ENCODE measurements at regions of chr5 and their contacts with region 1.

Region 1: DNA sequence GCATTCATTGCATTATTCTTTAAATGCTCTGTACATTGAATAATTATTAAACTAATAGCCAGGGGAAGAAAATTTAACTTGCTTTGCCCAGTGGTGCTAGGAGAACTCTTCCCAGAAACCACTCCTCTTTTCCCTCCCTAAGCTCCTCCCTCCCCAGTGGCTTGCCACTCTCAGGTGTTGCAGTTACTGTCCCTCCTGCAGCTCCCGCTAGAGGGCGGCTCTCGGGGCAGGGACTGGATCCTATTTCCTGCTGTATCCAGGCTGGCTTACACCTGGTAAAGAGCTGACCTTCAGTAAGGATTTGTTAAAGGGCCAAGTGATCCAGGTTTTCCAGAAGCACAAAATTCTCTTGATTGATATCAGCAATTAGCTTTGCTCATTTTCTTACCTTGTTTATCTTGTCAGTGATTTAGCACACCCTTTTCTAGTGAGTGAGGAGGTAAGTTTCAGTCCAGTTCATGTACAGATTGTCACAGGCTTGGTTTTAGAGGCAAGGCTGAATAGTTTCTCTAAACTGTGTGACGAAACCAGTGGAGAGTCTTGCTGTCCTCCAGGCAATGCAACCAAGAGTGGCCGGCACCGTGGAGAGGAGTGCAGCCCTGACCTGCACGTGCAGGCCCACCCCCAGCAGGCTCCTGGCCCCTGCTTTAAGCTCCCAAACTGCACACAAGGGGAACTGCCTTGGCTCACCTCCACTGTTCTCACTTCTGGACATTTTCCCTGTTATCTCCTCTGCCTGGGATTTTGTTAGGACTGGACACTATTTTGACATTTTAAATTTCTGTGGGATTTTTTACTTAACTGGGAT is 423.8 kb downstream of the SPOCK1 start:
- DNase-seq: peak; percentile 69
- ATAC-seq: peak; percentile 100
- H3K4me3 ChIP-seq: no peak overlapping the region
- H3K27ac ChIP-seq: no peak overlapping the region
- H3K4me1 ChIP-seq: no peaks in the 10 kb centered on the region
- H3K27me3 ChIP-seq: no peaks in the 10 kb centered on the region; a peak in 1 of 5 replicates
- CTCF ChIP-seq: peak; percentile 81
- EP300 ChIP-seq: no peak
- POLR2A ChIP-seq: no peak
- RAD21 ChIP-seq: peak; percentile 32; the same call in 1 of the 2 replicates

Region 2: DNA sequence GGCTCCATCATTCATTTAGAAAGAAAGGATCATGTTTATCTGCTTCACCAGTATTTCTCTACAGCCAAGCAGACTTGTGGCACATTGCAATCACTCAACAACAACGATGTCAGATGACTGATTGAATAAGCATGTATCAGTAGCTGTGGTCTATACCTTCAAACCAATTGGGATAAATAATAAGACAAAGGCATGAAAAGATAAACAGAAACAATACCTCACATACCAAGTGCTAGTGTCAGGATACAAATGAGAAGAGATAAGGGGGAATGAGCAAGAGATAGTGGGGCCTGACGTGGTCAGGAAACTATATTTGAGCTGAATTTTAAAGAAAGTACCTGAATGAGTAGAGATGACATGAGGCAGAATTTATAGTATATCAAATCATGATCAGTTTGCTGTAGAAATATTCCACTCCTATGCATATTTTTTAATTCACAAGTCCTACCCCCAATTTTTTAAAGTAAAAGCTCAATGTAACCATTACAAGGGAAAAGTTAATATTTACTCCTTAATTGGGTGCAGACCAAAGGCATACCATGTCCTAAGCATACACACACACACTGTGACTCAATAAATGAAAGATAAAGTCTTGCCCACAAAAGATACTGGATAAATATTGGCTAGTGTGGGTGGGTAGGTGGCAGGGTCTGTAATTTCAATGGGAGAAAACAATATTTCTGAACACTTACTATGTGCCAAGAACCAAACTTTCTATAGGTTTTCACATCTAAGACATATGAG is 139.3 kb after region 1 on chr5:
- CTCF ChIA-PET with region 1: no interaction called
- POLR2A ChIA-PET with region 1: no interaction called
- in situ Hi-C with region 1: no loop called
- intact Hi-C with region 1: loop called (anchors 1 kb)
- DNase-seq: peak; percentile 32
- ATAC-seq: no peak
- H3K4me3 ChIP-seq: peak overlapping the region in 1 of 3 experiments; percentile 0; a peak in 1 of 6 replicates
- H3K27ac ChIP-seq: no peak overlapping the region
- H3K4me1 ChIP-seq: peaks cover 66% of the 10 kb centered on the region
- H3K27me3 ChIP-seq: no peaks in the 10 kb centered on the region
- CTCF ChIP-seq: no peak
- EP300 ChIP-seq: peak in 1 of 2 experiments; percentile 22; a peak in 1 of 4 replicates
- POLR2A ChIP-seq: no peak
- RAD21 ChIP-seq: no peak

Region 3: GRCh38 chr5:137220523-137220927 is 145.2 kb after region 1 on chr5:
- CTCF ChIA-PET with region 1: no interaction called
- POLR2A ChIA-PET with region 1: no interaction called
- in situ Hi-C with region 1: loop called (anchors 5 kb)
- intact Hi-C with region 1: loop called (anchors 1 kb)
- DNase-seq: peak; percentile 76
- ATAC-seq: peak; percentile 93
- H3K4me3 ChIP-seq: no peak overlapping the region
- H3K27ac ChIP-seq: no peak overlapping the region
- H3K4me1 ChIP-seq: peaks cover 34% of the 10 kb centered on the region
- H3K27me3 ChIP-seq: no peaks in the 10 kb centered on the region
- CTCF ChIP-seq: peak; percentile 69
- EP300 ChIP-seq: no peak
- POLR2A ChIP-seq: no peak
- RAD21 ChIP-seq: no peak

Region 4: DNA sequence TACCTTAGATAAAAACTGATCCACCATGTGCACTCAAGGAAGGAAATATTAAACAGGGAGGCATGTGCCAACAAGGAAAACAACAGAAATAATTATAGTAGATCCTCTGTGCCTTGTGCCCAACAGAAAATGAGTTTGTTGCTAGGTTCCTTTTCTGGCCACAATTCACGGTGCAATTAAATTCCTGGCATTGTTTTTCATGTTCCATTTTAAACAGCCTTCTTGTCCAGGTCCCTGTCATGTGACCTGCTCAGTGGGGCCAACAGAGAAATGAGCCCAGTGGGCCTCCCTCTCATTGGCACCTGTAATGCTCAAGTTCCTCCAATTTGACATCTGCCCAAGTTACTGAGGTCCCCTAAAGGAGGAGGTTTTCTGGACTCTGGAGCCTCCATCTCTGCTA is 367.3 kb after region 1 on chr5:
- CTCF ChIA-PET with region 1: no interaction called
- POLR2A ChIA-PET with region 1: no interaction called
- in situ Hi-C with region 1: no loop called
- intact Hi-C with region 1: no loop called
- DNase-seq: no peak
- ATAC-seq: no peak
- H3K4me3 ChIP-seq: no peak overlapping the region
- H3K27ac ChIP-seq: no peak overlapping the region
- H3K4me1 ChIP-seq: no peaks in the 10 kb centered on the region
- H3K27me3 ChIP-seq: no peaks in the 10 kb centered on the region; a peak in 1 of 5 replicates
- CTCF ChIP-seq: no peak
- EP300 ChIP-seq: no peak
- POLR2A ChIP-seq: no peak
- RAD21 ChIP-seq: no peak

Measured in HepG2 (cell line).